MCF 10A (cell line): ENCODE measurements at regions of chr6 and their contacts with region 1.

Region 1: DNA sequence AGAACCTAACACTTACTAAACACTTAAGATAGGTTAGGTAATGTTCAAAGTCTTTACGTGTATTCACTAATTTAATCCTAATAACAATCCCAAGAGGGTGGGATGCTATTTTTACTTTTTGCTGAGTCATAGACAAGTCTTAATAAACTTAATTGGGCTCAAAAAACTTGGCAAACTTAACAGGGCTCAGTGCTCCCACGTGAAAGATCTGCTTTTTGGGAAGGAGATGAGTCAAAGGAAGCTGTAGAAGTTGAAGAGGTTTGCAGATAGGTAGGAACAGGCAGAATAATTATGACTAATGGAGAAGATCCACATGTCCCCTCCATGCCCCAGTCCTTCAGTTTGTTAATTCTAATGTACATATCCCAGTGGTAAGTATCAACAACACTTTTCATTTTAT is 44.5 kb upstream of the STMND1 start:
- DNase-seq: peak; percentile 66
- H3K4me3 Mint-ChIP-seq: no peak overlapping the region
- H3K27ac Mint-ChIP-seq: no peak overlapping the region
- H3K4me1 Mint-ChIP-seq: peaks cover 9% of the 10 kb centered on the region
- H3K27me3 Mint-ChIP-seq: no peaks in the 10 kb centered on the region
- CTCF ChIP-seq: no peak

Region 2: DNA sequence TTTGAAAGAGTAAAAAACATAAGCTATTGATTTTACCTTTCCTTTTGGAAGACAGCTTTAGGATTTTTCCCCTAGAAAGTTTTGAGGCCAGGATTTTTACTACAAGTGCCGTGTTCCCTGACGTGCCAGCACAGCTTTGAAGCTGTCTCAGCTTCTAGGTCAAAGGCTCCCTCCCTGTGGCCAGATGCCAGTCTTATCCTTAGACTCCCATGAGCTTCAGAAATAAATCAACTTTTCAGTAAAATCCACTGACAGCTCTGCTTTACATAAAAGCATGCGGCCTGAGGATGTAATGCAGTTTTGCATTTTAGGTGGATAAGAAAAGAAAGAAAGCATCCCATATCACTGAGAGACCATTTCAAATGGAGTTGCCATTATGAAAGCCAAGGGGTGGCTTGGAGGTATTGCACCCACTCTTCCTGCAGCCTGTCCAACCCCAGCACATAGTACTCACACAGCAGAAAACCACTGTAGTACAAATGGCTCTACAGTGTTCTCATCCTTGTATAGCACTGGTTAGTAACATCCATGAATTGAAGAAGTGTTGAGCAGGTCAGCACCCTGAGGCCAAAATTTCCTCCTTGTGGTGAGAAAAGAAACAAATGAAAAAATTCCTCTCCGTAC is 280.8 kb before region 1 on chr6:
- CTCF ChIA-PET with region 1: no interaction called
- POLR2A ChIA-PET with region 1: no interaction called
- intact Hi-C with region 1: no loop called
- DNase-seq: no peak
- H3K4me3 Mint-ChIP-seq: no peak overlapping the region
- H3K27ac Mint-ChIP-seq: no peak overlapping the region
- H3K4me1 Mint-ChIP-seq: no peaks in the 10 kb centered on the region
- H3K27me3 Mint-ChIP-seq: no peaks in the 10 kb centered on the region
- CTCF ChIP-seq: no peak

Region 3: DNA sequence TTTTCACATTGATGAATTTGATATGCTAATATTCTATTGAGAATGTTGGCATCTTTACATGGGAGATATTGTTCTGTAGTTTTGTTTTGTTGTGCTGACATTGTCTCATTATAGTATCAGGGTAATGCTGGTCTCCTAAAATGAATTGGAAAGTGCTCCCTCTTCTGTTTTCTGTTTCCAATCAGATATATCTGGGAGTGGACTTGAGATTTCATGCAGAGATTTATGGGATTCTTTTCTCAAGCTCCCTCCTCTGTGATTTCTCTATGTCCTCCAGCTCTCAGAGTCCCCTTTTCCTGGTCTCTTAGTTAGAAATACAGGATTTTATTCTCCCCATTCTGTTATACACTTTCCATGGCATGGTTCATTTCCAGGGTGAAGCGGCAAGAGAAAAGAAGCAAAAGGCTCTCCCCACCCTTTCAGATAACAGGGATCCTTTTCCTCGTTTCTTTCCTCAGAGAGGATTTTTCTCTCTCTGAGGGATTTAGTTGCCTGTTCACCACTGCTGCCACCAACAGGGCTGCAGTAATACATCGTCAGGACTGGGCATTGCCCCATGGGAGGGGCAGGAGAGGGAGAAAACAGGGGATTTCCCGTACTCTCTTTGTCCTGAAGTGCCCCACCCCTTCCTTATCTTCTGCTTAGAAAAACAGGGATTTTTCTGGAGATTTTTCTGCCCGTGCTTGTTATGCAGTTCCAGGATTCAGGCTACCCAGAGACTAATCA is 14.7 kb before region 1 on chr6:
- CTCF ChIA-PET with region 1: interaction called, 13 read pairs
- POLR2A ChIA-PET with region 1: interaction called, 4 read pairs
- intact Hi-C with region 1: no loop called
- DNase-seq: peak; percentile 55
- H3K4me3 Mint-ChIP-seq: peak overlapping the region; percentile 27
- H3K27ac Mint-ChIP-seq: peak overlapping the region; percentile 49
- H3K4me1 Mint-ChIP-seq: peaks cover 13% of the 10 kb centered on the region
- H3K27me3 Mint-ChIP-seq: peaks cover 12% of the 10 kb centered on the region
- CTCF ChIP-seq: peak; percentile 26

Region 4: GRCh38 chr6:17130786-17131185 is 73.5 kb after region 1 on chr6:
- CTCF ChIA-PET with region 1: no interaction called
- POLR2A ChIA-PET with region 1: no interaction called
- intact Hi-C with region 1: no loop called
- DNase-seq: no peak
- H3K4me3 Mint-ChIP-seq: no peak overlapping the region
- H3K27ac Mint-ChIP-seq: no peak overlapping the region
- H3K4me1 Mint-ChIP-seq: no peaks in the 10 kb centered on the region
- H3K27me3 Mint-ChIP-seq: peaks cover 17% of the 10 kb centered on the region
- CTCF ChIP-seq: no peak

Region 5: DNA sequence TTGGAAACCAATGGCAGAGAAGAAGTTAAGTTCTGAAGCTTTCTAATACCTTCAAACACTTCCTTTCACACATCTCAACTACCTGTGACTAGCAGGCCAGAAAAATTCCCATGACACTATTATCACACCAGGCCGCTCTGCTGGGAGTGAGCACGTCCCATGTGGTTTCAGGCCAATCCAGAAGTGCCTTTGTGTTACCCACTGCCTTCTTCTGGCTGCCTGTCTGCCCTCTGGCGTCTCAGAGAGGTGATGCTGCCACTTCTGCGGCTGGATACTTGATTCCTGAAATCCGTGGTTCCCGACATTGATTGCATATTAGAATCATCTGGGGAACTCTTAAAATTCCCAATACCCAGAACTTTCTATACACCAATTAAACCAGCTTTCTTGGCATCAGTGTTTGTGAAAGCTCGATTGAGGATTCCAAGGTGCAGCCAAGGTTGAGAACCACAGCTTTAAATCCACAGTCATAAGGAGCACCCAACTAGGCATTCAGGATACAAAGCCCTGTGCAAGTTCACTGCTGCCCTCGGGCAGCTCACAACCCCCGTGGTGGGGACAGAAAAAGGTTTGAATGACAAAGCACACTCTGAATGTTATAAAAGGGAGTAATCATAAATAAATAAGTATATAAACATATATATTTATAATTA is 110.1 kb after region 1 on chr6:
- CTCF ChIA-PET with region 1: no interaction called
- POLR2A ChIA-PET with region 1: no interaction called
- intact Hi-C with region 1: no loop called
- DNase-seq: peak; percentile 1
- H3K4me3 Mint-ChIP-seq: no peak overlapping the region
- H3K27ac Mint-ChIP-seq: no peak overlapping the region
- H3K4me1 Mint-ChIP-seq: no peaks in the 10 kb centered on the region
- H3K27me3 Mint-ChIP-seq: no peaks in the 10 kb centered on the region
- CTCF ChIP-seq: no peak